Activated CD4-positive, alpha-beta memory T cell treated with anti-CD3 and anti-CD28 coated beads, Interleukin-2, amount 10 ng/mL, durations not matched to agents 7 days and 5 days (primary cell): ENCODE measurements at regions of chr2 and their contacts with region 1.

Region 1: DNA sequence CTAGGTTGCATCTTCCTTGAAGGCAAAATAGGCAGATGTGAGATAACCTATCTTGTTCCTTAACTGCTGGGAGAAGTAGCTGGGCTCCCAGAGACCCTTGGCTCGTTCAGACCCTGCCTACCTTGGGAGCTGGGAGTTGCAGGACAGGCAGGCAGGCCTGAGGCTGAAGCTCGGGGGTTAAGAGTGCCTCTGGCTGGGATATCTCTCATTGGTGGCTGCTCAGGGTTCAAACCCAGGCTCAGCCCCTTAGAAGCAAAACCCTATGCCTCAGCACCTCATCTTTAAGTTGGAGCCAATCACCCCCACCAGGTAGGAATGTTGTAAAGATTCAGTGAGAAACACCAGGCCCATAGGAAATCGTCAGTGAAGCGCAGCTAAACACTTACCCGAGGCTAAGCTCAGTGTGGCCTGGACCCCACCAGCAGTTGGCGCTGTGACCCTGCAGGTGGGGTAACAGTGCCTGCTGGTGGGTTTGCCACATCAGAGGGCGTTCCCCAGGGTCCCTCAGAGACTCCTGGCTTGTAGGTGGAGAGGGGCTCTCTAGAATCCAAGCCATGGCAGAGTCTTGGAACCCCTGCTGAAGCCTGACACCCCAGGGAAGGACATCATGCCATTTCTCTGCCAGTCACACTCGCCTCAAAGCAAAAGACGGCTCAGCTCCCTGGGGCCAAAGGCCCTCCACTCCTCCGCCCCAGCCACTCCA is 54.6 kb upstream of the GPR17 start:
- DNase-seq: peak; percentile 64
- H3K4me3 Mint-ChIP-seq: no peak overlapping the region
- H3K27ac Mint-ChIP-seq: no peak overlapping the region
- H3K4me1 Mint-ChIP-seq: peaks cover 4% of the 10 kb centered on the region
- H3K27me3 Mint-ChIP-seq: peaks cover 13% of the 10 kb centered on the region

Region 2: DNA sequence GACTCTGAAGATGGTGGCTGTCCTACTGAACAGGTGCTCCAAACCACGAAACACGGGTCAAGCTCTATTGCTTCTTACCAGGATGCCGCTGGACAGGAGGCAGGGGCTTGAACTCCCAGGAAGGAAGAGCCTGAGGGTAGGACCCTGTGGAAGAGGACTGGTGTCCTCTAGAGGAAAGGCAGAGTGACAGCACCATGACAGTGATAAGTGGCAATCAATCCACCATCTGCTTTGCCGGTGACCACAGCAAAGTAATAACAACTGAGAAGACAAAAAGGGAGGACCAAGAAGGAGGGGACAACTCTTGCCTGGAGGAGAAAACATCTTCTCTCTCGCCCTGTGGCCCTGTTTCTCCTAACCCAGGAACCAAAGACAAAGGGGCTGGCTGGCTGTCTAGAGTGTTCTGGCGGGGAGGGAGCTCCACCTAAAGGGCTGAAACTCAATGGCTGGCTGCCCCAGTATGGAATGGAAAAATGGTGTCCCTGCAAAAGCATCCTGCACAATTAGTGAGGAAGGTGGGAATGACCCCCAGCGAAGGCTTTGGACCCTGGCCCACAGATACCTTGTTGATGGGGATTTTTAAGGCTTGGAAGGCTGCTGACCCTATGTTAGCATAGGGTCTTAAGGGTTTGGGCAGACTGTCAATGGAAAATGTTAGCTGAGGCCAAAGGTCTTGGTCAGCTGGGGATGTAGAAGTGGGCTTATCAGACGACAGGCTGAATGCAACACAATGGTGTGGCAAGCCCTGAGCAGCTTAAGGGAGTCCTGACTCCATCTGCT is 137.8 kb before region 1 on chr2:
- CTCF ChIA-PET with region 1: no interaction called
- POLR2A ChIA-PET with region 1: no interaction called
- DNase-seq: no peak
- H3K4me3 Mint-ChIP-seq: no peak overlapping the region
- H3K27ac Mint-ChIP-seq: no peak overlapping the region
- H3K4me1 Mint-ChIP-seq: peaks cover 19% of the 10 kb centered on the region
- H3K27me3 Mint-ChIP-seq: peaks cover 5% of the 10 kb centered on the region

Region 3: GRCh38 chr2:127577973-127578372 is 13.4 kb before region 1 on chr2:
- CTCF ChIA-PET with region 1: interaction called, 14 read pairs
- POLR2A ChIA-PET with region 1: interaction called, 3 read pairs
- DNase-seq: peak; percentile 14
- H3K4me3 Mint-ChIP-seq: no peak overlapping the region
- H3K27ac Mint-ChIP-seq: no peak overlapping the region
- H3K4me1 Mint-ChIP-seq: peaks cover 3% of the 10 kb centered on the region
- H3K27me3 Mint-ChIP-seq: peaks cover 31% of the 10 kb centered on the region

Region 4: GRCh38 chr2:127606622-127607395 is 15.4 kb after region 1 on chr2:
- CTCF ChIA-PET with region 1: interaction called, 15 read pairs
- POLR2A ChIA-PET with region 1: no interaction called
- DNase-seq: no peak
- H3K4me3 Mint-ChIP-seq: no peak overlapping the region
- H3K27ac Mint-ChIP-seq: no peak overlapping the region
- H3K4me1 Mint-ChIP-seq: peaks cover 2% of the 10 kb centered on the region
- H3K27me3 Mint-ChIP-seq: peaks cover 9% of the 10 kb centered on the region

Region 5: DNA sequence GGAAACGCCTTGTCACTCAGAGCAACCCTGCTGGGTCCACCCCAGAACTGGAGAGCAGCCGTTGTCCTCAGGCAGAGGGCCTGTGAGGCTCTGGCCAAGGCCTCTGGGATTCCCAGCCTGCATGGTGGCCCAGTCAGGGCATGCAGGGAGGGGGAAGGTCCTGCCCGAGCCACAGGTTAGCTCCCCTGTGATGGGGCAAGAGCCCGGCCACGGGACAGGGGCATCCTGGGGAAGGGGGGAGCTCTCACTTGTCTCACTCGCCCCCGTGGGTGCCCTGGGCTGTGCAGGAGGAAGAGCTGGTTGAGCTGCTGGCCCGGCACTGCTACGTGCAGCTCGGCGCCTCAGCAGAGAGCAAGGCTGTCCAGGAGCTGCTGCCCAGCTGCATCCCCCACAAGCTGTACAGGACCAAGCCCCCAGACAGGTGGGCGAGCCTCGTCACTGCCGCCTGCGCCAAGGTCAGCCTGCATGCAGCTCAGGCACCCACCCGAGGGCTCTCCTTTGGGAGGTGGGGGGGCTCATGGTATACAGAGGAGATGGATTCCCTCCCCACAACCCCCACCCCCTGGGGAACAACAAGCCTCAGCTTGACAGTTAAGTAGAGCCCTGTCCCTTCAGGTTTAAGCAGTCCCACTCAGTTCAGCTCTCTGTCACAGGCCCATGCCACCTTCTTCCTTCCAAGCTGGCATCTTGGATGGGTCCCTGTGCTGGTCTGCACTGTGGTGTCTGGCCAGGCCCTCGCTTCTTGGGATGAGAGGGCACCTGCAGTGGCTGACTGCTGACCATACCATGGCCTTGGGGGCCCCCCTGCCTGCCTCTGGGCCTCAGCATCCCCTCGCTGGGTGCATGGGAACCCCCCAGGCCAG is 33.9 kb after region 1 on chr2:
- CTCF ChIA-PET with region 1: no interaction called
- POLR2A ChIA-PET with region 1: no interaction called
- DNase-seq: no peak
- H3K4me3 Mint-ChIP-seq: no peak overlapping the region
- H3K27ac Mint-ChIP-seq: no peak overlapping the region
- H3K4me1 Mint-ChIP-seq: no peaks in the 10 kb centered on the region
- H3K27me3 Mint-ChIP-seq: peaks cover 3% of the 10 kb centered on the region

Region 6: DNA sequence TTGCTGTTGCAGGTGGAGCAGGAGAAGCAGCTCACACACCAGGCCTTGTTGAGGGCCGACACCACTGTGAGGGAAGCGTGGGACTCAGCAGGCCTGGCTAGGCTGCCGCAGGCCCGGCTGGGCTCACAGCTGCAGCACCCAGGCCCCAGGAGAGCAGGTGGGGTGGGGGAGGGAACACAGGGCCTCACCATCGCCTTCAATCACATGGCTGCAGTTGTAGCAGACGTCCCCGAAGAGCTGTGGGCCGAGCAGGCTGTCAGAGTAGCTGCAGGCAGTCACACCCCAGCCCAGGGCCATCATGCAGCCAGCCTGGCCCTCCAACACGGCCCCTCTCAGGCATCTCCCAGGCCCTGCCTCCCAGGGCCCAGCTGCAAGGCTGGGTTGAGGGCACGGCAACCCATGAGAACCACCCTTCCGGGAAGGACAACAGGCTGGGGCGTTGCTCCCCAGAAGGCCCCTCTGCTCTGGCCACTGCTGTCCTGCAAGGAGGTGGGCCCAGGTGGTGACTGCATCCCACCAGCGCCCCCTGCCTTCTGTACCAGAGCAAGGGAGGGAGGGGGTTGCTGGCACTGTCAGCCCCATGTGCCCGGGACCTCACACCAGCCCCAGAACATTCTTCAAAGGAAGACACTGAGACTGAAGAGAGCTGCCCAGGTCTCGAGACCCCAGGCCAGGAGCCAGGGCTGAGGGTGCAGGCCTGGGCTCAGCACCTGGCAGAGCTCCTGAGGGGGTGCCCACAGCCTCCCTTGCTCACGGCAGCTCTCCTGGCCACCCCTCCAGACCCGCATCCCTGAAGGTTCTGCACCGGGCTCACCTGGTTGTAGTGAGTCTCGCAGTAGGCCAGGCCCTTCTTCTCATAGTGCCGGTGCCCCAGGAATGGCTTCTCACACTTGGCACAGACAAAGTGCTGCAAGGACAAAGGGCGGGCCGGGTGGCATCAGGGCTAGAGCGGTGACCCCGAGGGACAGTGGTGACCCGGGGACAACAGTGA is 49.0 kb after region 1 on chr2:
- CTCF ChIA-PET with region 1: interaction called, 16 read pairs
- POLR2A ChIA-PET with region 1: no interaction called
- DNase-seq: peak; percentile 42
- H3K4me3 Mint-ChIP-seq: peak overlapping the region; percentile 54
- H3K27ac Mint-ChIP-seq: peak overlapping the region; percentile 63
- H3K4me1 Mint-ChIP-seq: peaks cover 42% of the 10 kb centered on the region
- H3K27me3 Mint-ChIP-seq: no peaks in the 10 kb centered on the region

Region 7: DNA sequence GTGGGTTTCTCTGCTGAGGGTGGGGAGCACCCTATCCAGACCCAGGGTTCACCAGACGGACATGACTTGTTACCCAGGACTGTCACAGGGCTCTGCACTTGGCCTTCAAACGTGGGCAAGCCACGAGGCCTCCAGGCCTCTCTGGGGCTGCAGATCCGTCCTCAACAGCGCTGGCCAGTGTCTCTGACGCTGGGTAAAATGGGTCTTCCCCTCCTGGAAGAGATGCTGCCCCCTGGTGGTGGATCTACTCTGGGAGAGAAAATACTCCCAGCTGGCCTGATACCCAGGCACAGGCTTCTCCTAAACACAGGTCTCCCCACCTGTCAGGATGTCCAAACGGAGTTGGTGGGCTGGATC is 58.3 kb after region 1 on chr2:
- CTCF ChIA-PET with region 1: interaction called, 97 read pairs
- POLR2A ChIA-PET with region 1: interaction called, 6 read pairs
- DNase-seq: peak; percentile 75
- H3K4me3 Mint-ChIP-seq: no peak overlapping the region
- H3K27ac Mint-ChIP-seq: no peak overlapping the region
- H3K4me1 Mint-ChIP-seq: peaks cover 8% of the 10 kb centered on the region
- H3K27me3 Mint-ChIP-seq: peaks cover 3% of the 10 kb centered on the region

Region 8: DNA sequence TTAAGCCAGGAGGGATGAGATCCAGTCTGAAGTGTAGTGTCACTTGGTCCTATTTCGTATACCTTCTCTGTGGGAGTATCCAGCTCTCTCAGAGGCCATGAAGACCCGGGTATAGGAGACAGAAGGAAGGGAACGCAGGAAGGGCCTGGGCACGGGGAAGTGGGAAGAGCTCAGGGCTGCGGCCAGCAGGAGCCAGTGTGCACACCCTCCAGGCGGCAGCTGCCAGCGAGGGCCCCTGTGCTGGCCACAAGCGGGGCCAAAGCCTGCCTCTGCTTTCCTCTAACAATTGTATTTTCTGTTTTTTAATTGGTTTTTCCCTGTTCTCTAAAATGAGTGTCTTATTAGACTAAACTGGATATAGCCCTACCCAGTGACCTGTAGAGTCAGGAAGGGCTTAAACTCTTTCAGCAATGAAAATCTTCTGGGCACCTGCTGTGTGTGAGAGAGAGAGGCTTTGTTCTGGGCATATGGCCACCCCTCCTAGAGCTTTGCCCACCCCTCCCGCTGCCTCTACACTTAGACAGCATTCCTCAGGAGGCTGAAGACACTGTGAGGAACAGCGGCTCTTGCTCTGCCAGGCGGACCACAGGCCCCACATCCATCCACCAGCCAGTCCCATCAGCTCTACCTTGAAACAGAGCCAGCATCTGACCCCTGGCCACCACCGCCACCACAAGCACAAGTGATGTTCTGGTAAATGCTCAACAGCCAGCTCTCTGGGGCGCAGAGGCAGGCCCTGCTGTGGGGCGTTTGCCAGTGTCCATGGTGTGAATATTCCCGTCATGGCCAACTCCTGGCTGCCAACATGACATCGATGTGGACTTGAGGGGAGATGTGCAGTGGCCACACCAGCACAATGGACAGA is 64.1 kb after region 1 on chr2:
- CTCF ChIA-PET with region 1: interaction called, 97 read pairs
- POLR2A ChIA-PET with region 1: no interaction called
- DNase-seq: no peak
- H3K4me3 Mint-ChIP-seq: no peak overlapping the region
- H3K27ac Mint-ChIP-seq: no peak overlapping the region
- H3K4me1 Mint-ChIP-seq: no peaks in the 10 kb centered on the region
- H3K27me3 Mint-ChIP-seq: peaks cover 3% of the 10 kb centered on the region